Ascending aorta (tissue), 2 donors: ENCODE measurements at regions of chr14 and their contacts with region 1.

Region 1: DNA sequence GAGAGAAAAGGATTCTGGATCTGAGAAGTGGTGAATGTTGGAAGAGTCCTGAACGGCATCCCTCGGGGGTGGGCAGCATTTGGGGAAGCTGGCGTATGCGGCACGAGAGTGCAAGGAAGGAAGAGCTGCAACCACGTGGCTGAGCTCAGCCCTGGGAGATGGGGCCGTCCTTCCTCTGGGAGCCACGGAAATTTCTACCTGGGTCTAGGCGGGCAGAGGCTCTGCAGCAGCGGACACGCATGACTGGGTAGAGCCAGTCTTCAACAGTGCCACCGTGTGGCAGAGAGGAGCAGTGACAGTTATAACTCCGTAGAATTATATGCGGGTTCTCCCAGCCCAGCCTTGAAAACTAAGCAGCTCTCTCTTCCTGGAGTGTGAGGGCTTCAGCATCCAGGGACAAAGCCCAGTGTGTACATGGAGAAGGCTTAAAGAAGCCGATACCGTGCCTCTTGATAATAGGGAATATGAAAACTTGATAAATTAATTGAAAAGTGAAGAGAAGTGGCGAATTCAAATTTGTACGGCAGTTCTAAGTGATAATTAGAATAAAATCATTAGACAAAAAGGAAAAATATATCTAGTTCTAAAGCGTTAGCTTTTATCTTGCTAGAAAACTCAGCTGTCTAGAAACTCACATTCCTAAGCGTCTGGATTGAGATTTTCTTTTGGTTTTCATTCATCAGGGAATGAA is 82.9 kb upstream of the STXBP6 start:
- DNase-seq: peak in 1 of 2 donors; percentile 67
- H3K4me3 ChIP-seq: no peak overlapping the region
- H3K27ac ChIP-seq: no peak overlapping the region
- H3K4me1 ChIP-seq: no peaks in the 10 kb centered on the region
- H3K27me3 ChIP-seq: no peaks in the 10 kb centered on the region
- CTCF ChIP-seq: peak; percentile 46 to 83 (median 72)

Region 2: GRCh38 chr14:24744641-24745040 is 388.2 kb before region 1 on chr14:
- intact Hi-C with region 1: no loop called
- DNase-seq: no peak
- H3K4me3 ChIP-seq: no peak overlapping the region
- H3K27ac ChIP-seq: no peak overlapping the region
- H3K4me1 ChIP-seq: no peaks in the 10 kb centered on the region
- H3K27me3 ChIP-seq: no peaks in the 10 kb centered on the region
- CTCF ChIP-seq: no peak

Region 3: GRCh38 chr14:24806061-24806678 is 326.7 kb before region 1 on chr14:
- intact Hi-C with region 1: loop called (anchors 5 kb)
- DNase-seq: peak in 1 of 2 donors; percentile 67
- H3K4me3 ChIP-seq: no peak overlapping the region
- H3K27ac ChIP-seq: no peak overlapping the region
- H3K4me1 ChIP-seq: no peaks in the 10 kb centered on the region
- H3K27me3 ChIP-seq: no peaks in the 10 kb centered on the region
- CTCF ChIP-seq: peak; percentile 17 to 64 (median 50)

Region 4: GRCh38 chr14:25049568-25050268 is 83.2 kb before region 1 on chr14 and contains the start of gene STXBP6:
- intact Hi-C with region 1: loop called (anchors 5 kb)
- DNase-seq: peak in 1 of 2 donors; percentile 65
- H3K4me3 ChIP-seq: peak within 1 kb of the TSS; percentile 68 to 75
- H3K27ac ChIP-seq: no peak within 1 kb of the TSS
- H3K4me1 ChIP-seq: peaks cover 0 to 3% of the 10 kb centered on the region in 2 donors
- H3K27me3 ChIP-seq: no peaks in the 10 kb centered on the region
- CTCF ChIP-seq: no peak
- total RNA-seq, gene STXBP6: 0.21 TPM

Region 5: GRCh38 chr14:25111061-25111601 is 21.7 kb before region 1 on chr14:
- intact Hi-C with region 1: no loop called
- DNase-seq: peak in 1 of 2 donors; percentile 69
- H3K4me3 ChIP-seq: no peak overlapping the region
- H3K27ac ChIP-seq: peak overlapping the region; percentile 8 to 42
- H3K4me1 ChIP-seq: no peaks in the 10 kb centered on the region
- H3K27me3 ChIP-seq: no peaks in the 10 kb centered on the region
- CTCF ChIP-seq: no peak